Activated T-helper 1 cell treated with anti-CD3 and anti-CD28 coated beads, Interleukin-12 subunit alpha, Interleukin-12 subunit beta, Interleukin-2, Interleukin-4 antibody, amounts not matched to agents 30 ng/mL and 10 ng/mL and 1 ng/mL, durations not matched to agents 14 hours and 24 hours and 36 hours (primary cell): ENCODE measurements at regions of chr17 and their contacts with region 1.

Region 1: GRCh38 chr17:58337600-58338453 is 9.2 kb upstream of the TSPOAP1 start:
- DNase-seq: peak; percentile 92
- H3K4me3 Mint-ChIP-seq: peak overlapping the region; percentile 100
- H3K27ac Mint-ChIP-seq: peak overlapping the region; percentile 99
- H3K4me1 Mint-ChIP-seq: peaks cover 61% of the 10 kb centered on the region
- H3K27me3 Mint-ChIP-seq: peaks cover 2% of the 10 kb centered on the region

Region 2: GRCh38 chr17:57995076-57995956 is 342.5 kb before region 1 on chr17:
- intact Hi-C with region 1: no loop called
- DNase-seq: peak; percentile 22
- H3K4me3 Mint-ChIP-seq: no peak overlapping the region
- H3K27ac Mint-ChIP-seq: no peak overlapping the region
- H3K4me1 Mint-ChIP-seq: peaks cover 58% of the 10 kb centered on the region
- H3K27me3 Mint-ChIP-seq: no peaks in the 10 kb centered on the region

Region 3: GRCh38 chr17:58692239-58693055 is 354.6 kb after region 1 on chr17 and contains the start of gene RAD51C:
- intact Hi-C with region 1: loop called (anchors 10 kb)
- DNase-seq: peak; percentile 86
- H3K4me3 Mint-ChIP-seq: peak within 1 kb of the TSS; percentile 97
- H3K27ac Mint-ChIP-seq: peak within 1 kb of the TSS; percentile 98
- H3K4me1 Mint-ChIP-seq: peaks cover 31% of the 10 kb centered on the region
- H3K27me3 Mint-ChIP-seq: no peaks in the 10 kb centered on the region
- total RNA-seq, gene RAD51C: 86.3 and 91.2 TPM in 2 replicates

Region 4: GRCh38 chr17:59837308-59838051 is 1499.7 kb after region 1 on chr17:
- intact Hi-C with region 1: loop called (anchors 5 kb)
- DNase-seq: peak; percentile 81
- H3K4me3 Mint-ChIP-seq: peak overlapping the region; percentile 96
- H3K27ac Mint-ChIP-seq: peak overlapping the region; percentile 99
- H3K4me1 Mint-ChIP-seq: peaks cover 27% of the 10 kb centered on the region
- H3K27me3 Mint-ChIP-seq: peaks cover 2% of the 10 kb centered on the region